Kidney (tissue), 22 donors: ENCODE measurements at regions of chr3 and their contacts with region 1.

Region 1: DNA sequence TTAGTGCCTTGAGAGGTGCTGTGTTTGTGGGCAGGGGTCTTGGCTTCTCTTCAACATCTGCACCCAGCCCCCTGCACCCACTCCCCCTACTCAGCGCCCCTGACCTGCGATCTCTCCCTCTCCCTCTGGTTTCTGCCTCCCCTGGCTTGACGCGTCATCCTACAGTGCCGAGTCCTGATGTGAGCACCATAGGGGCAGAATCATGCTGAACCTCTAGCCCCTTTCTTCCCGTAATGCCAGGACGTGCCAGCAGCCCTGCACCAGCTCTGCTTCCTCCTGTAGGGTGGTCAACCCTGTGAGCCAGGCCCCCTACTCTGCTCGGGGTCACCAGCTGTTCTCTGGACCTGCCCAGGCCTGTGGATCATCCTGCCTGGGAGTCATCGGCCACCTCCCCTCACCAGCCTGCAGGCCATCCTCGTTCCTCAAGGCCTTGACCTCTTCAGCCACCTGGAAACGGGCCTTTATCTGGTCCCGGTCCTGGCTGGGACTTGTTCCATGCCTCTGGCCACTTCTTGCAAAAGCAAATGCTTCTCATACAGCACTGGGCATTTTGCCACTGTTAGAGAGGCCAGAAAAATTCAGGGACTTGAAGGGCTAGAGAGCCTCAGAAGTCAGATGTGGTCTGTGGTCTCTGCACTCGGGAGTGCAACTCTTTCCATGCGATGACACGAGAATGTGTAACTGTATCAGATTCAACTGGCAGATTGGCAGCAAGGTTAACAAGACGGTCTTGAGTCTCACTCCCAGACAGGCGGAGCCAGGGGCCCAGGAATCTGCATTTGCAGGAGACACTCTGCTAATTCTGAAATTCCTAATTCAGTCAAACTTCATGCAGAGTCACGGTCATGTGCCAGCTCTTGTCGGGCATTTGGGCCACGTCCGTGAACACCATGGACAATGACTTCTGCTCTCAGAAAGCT is 16.7 kb upstream of the KLF15 start:
- DNase-seq: peak in 2 of 5 donors; percentile 37 to 53
- H3K4me3 ChIP-seq: no peak overlapping the region
- H3K27ac ChIP-seq: no peak overlapping the region
- H3K4me1 ChIP-seq: peaks cover 0 to 14% (median 9%) of the 10 kb centered on the region in 3 donors
- H3K27me3 ChIP-seq: no peaks in the 10 kb centered on the region
- CTCF ChIP-seq: no peak

Region 2: GRCh38 chr3:125694761-125695294 is 679.1 kb before region 1 on chr3:
- intact Hi-C with region 1: no loop called
- DNase-seq: no peak
- H3K4me3 ChIP-seq: no peak overlapping the region
- H3K27ac ChIP-seq: no peak overlapping the region
- H3K4me1 ChIP-seq: no peaks in the 10 kb centered on the region
- H3K27me3 ChIP-seq: no peaks in the 10 kb centered on the region
- CTCF ChIP-seq: no peak

Region 3: GRCh38 chr3:126129181-126129891 is 244.6 kb before region 1 on chr3:
- intact Hi-C with region 1: loop called (anchors 10 kb)
- DNase-seq: peak in 4 of 5 donors; percentile 9 to 93 (median 22)
- H3K4me3 ChIP-seq: no peak overlapping the region
- H3K27ac ChIP-seq: no peak overlapping the region
- H3K4me1 ChIP-seq: peaks cover 0 to 3% (median 0%) of the 10 kb centered on the region in 3 donors
- H3K27me3 ChIP-seq: no peaks in the 10 kb centered on the region
- CTCF ChIP-seq: no peak

Region 4: GRCh38 chr3:126259411-126260391 is 114.2 kb before region 1 on chr3:
- intact Hi-C with region 1: no loop called
- DNase-seq: peak in 3 of 5 donors; percentile 52 to 69 (median 62)
- H3K4me3 ChIP-seq: peak overlapping the region in 2 of 3 donors; percentile 10 to 38
- H3K27ac ChIP-seq: no peak overlapping the region
- H3K4me1 ChIP-seq: peaks cover 0 to 3% (median 0%) of the 10 kb centered on the region in 3 donors
- H3K27me3 ChIP-seq: no peaks in the 10 kb centered on the region
- CTCF ChIP-seq: peak; percentile 73

Region 5: DNA sequence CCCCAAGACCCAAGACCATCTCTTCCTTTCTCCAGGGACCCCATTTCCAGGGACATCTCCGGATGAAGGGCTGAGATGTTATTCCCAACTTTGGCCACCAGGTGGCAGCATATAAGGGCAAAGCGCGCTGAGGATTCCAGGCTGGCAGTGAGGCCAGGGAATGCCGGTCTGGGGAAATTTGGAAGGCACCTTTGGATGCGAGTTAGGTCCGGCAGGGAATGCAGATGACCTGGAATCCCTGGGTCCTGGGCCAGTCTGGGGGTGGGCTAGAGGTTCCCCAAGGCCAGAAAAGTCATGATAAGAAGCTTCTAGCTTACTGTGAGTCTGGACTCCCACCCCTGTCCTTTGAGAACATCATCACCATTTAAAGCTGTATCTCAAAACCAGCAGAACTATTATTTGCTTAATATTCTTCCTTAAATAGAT is 148.4 kb after region 1 on chr3:
- intact Hi-C with region 1: no loop called
- DNase-seq: peak; percentile 39 to 79 (median 72)
- H3K4me3 ChIP-seq: no peak overlapping the region
- H3K27ac ChIP-seq: no peak overlapping the region
- H3K4me1 ChIP-seq: peaks cover 0 to 2% (median 0%) of the 10 kb centered on the region in 3 donors
- H3K27me3 ChIP-seq: peaks cover 3% of the 10 kb centered on the region
- CTCF ChIP-seq: peak; percentile 90

Region 6: DNA sequence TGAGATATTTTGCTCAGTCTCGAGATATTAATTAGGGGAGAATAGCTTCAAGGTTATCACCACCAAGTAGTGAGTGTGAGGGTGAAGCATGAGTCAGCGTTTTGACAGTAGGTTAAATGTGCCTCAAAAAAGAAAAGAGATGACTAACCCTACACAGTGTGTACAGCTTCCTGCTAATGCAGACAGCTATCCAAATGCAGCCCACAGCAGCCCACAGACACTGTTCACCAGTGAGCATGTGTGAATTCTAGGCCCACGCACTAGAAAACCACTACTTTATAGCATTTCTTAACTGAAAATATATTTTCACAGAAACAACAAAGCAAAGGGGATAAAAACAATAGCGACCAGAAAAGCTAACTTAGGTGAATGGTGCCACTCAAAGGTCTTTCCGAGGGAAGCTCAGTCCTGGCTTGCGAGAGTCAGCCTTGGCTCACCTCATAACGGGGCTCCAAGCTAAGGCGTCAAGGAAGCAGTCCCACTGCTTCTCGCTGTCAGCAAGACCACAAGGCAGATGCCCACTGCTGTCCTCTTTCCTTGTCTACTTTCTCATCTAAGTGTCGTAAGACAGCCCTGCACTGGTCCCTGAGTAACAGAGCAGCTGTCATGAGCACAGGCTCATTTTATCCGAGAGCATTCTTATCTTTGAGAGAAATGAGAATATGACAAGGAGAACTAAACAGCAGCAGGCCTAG is 233.4 kb after region 1 on chr3:
- intact Hi-C with region 1: no loop called
- DNase-seq: no peak
- H3K4me3 ChIP-seq: no peak overlapping the region
- H3K27ac ChIP-seq: no peak overlapping the region
- H3K4me1 ChIP-seq: no peaks in the 10 kb centered on the region
- H3K27me3 ChIP-seq: no peaks in the 10 kb centered on the region
- CTCF ChIP-seq: no peak